ENCODE measurements at regions of chr9 and their contacts with region 1.

Region 1: GRCh38 chr9:115524453-115525059 is 406.6 kb upstream of the TNC start:
- DNase-seq: peak; percentile 16
- ATAC-seq: no peak
- H3K4me3 Mint-ChIP-seq: no peak overlapping the region
- H3K27ac Mint-ChIP-seq: no peak overlapping the region
- H3K4me1 Mint-ChIP-seq: no peaks in the 10 kb centered on the region
- H3K27me3 Mint-ChIP-seq: peaks cover 28% of the 10 kb centered on the region

Region 2: DNA sequence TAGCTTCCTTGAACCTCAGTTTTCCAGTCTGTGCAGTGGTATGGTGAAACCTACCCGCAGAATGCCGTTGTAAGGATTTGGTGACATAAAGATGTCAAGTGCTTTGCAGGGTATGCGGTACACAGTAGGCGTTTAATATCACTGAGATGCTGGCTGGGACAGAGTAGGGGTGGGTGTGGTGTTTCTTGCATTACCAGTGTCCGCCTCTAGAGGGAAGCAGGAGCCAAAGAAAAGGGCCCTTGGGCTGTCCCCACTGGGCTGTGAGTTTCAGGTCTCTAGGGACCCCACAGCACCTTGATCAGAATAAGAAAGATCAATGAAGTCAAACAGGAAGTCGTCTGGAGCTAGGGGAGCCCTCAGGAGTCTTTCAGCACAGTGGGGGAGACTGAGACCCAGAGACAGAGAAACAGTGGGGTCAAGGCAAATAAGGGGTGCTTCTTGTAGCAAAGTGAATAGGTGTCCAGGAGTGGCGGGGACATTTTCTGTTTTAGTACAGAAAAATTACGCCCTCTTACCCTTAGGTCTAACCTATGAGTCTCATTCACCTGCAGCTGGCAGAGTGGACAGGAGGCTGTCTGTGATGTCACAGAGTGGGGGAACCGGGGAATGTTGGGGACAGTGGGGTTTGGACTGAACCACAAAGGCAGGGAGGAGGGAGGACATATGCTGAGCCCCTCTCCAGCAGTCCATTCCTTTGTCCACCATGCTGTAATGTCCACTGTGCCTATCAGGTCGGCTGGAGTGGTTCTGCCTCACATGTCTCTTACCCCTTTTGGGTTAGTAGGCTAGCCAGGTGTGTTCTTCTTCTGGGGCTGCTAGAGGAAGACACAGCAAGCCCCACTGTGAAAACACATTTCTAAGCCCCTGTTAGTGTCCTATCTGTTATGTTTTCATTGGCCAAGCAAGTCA is 862.2 kb before region 1 on chr9:
- CTCF ChIA-PET with region 1: no interaction called
- POLR2A ChIA-PET with region 1: no interaction called
- intact Hi-C with region 1: loop called (anchors 1 to 5 kb)
- DNase-seq: peak; percentile 80
- ATAC-seq: peak; percentile 92
- H3K4me3 Mint-ChIP-seq: no peak overlapping the region
- H3K27ac Mint-ChIP-seq: no peak overlapping the region
- H3K4me1 Mint-ChIP-seq: peaks cover 9% of the 10 kb centered on the region
- H3K27me3 Mint-ChIP-seq: peaks cover 5% of the 10 kb centered on the region

Region 3: DNA sequence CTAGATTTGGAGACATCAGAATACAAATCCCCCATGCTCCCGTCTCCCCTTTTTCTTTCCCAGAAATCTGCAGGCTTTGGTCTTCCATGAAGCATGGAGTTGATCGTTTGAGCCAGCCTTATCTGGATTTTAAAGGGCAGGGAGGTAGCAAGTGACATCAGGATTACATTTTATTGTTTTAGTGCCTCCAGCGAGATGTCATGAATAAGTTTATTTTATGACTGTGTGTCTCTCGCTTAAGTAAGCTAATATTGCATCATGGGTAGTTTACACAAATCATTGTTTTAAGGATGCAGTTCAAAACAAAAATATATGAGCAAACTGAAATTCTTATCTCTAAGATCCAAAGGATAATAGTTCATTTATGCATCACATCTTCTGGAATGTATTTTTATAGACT is 543.5 kb before region 1 on chr9:
- CTCF ChIA-PET with region 1: no interaction called
- POLR2A ChIA-PET with region 1: no interaction called
- intact Hi-C with region 1: no loop called
- DNase-seq: no peak
- ATAC-seq: no peak
- H3K4me3 Mint-ChIP-seq: no peak overlapping the region
- H3K27ac Mint-ChIP-seq: no peak overlapping the region
- H3K4me1 Mint-ChIP-seq: no peaks in the 10 kb centered on the region
- H3K27me3 Mint-ChIP-seq: no peaks in the 10 kb centered on the region

Measured in activated CD4-positive, alpha-beta T cell treated with anti-CD3 and anti-CD28 coated beads for 36 hours (primary cell).